Posterior vena cava (tissue), 2 donors: ENCODE measurements at regions of chr7 and their contacts with region 1.

Region 1: DNA sequence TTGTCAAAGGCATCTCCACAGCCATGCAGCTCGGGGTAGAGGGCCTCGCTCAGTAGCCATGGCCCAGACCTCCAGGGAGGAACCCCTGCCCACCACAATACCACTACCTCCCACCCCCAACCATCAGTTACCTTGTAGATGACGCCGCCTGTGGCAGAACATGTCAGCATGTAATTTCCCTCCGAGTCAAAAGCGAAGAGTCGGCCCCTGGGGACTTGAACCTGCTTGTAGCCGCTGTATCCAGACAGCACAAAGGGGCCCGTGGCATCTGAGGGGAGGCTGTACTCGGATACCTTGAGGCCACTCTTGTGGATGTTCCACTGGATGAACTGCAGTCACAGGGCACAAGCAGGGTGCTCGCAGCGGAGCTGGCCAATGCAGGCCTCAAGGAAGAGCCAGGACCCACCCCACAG is 16.3 kb upstream of the CYREN start:
- DNase-seq: peak; percentile 80

Region 2: GRCh38 chr7:134669845-134670373 is 516.9 kb before region 1 on chr7:
- intact Hi-C with region 1: loop called in 1 of 2 experiments (anchors 10 kb)
- DNase-seq: peak; percentile 84